ENCODE measurements at regions of chr5 and their contacts with region 1.

Region 1: GRCh38 chr5:150461231-150461630 is 11.7 kb upstream of the RPS14 start:
- DNase-seq: no peak
- H3K4me3 ChIP-seq: no peak overlapping the region
- H3K27ac ChIP-seq: no peak overlapping the region
- H3K4me1 ChIP-seq: peaks cover 36% of the 10 kb centered on the region
- H3K27me3 ChIP-seq: no peaks in the 10 kb centered on the region
- CTCF ChIP-seq: no peak
- POLR2A ChIP-seq: no peak

Region 2: GRCh38 chr5:150523472-150524350 is 62.5 kb after region 1 on chr5:
- intact Hi-C with region 1: loop called (anchors 10 kb)
- DNase-seq: peak; percentile 71
- H3K4me3 ChIP-seq: no peak overlapping the region
- H3K27ac ChIP-seq: peak overlapping the region in 1 of 2 donors; percentile 70
- H3K4me1 ChIP-seq: peaks cover 61% of the 10 kb centered on the region
- H3K27me3 ChIP-seq: no peaks in the 10 kb centered on the region
- CTCF ChIP-seq: peak; percentile 49 to 59 (median 51)
- POLR2A ChIP-seq: no peak

Region 3: GRCh38 chr5:150624334-150625163 is 163.3 kb after region 1 on chr5:
- intact Hi-C with region 1: no loop called
- DNase-seq: no peak
- H3K4me3 ChIP-seq: peak overlapping the region; percentile 79 to 89
- H3K27ac ChIP-seq: peak overlapping the region; percentile 86 to 89
- H3K4me1 ChIP-seq: peaks cover 39% of the 10 kb centered on the region
- H3K27me3 ChIP-seq: no peaks in the 10 kb centered on the region
- CTCF ChIP-seq: no peak
- POLR2A ChIP-seq: no peak

Measured in testis (tissue), 5 donors.